H1 (cell line): ENCODE measurements at regions of chr1 and their contacts with region 1.

Region 1: DNA sequence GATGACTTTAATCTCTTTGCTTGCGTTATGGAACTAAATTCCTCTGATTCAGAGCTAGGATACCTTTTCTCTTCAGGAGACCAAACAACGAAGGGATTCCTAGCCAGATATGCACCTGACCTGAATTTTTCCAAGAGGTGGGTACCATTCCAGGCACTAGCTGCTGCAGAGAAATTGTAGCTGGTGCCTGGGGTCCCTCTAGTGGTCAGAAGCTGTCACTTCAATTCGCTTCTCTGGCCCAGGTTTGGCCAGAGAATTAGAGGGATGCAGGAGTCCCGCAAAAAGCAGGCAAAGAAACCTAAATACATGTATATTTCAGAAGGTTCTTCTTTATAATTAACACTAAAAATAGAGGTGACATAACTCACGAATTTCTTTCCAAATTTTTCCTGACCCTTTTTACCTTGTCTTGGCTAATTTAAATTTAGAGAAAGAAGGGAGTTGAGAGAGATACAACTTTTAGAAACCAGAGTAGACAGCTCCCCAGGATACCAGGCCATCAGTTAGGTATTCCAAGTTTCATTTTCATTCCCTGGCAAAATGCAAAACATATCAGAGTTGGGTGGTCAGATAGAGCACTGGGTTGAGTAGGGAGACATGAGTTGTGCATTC is 9.6 kb downstream of the ACKR1 start:
- DNase-seq: peak in 1 of 2 experiments; percentile 65
- H3K4me3 ChIP-seq: no peak overlapping the region
- H3K27ac ChIP-seq: no peak overlapping the region
- H3K4me1 ChIP-seq: peaks cover 6 to 14% (median 11%) of the 10 kb centered on the region in 4 experiments
- H3K27me3 ChIP-seq: no peaks in the 10 kb centered on the region
- CTCF ChIP-seq: peak; percentile 77 to 89 (median 88)
- EP300 ChIP-seq: no peak
- POLR2A ChIP-seq: no peak
- RAD21 ChIP-seq: peak; percentile 82 to 85

Region 2: DNA sequence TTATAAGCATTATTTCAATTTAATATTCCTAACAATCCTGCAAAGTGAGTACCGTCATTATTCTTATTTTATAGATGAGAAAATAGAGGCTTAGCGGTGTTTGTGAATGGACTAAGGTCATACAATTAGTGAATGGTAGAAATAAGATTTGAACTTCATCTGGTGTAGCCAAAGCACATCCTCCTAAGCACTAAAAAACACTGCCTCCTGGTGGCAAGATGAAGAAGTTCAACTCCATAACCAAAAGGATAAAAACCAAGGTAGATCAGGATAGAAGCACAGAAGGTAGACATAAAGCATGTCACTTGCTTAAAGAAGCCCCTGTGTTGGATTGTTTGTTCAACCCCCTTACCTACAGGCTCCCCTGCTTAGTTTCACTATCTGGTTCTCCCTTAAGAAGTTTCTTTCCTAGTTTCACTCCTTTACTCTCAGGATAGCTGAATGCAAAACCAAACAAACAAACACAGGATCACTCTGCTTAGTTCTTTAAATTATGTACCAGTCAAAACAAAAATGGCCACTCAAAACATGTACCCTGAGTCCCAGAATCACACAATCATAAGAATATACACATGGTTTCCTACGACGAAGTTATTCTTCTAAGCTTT is 125.0 kb before region 1 on chr1:
- CTCF ChIA-PET with region 1: interaction called, 10 read pairs
- POLR2A ChIA-PET with region 1: no interaction called
- DNase-seq: no peak
- H3K4me3 ChIP-seq: no peak overlapping the region
- H3K27ac ChIP-seq: no peak overlapping the region
- H3K4me1 ChIP-seq: no peaks in the 10 kb centered on the region
- H3K27me3 ChIP-seq: no peaks in the 10 kb centered on the region
- CTCF ChIP-seq: peak in 2 of 3 experiments; percentile 46 to 74; a peak in 3 of 4 replicates
- EP300 ChIP-seq: no peak
- POLR2A ChIP-seq: no peak
- RAD21 ChIP-seq: peak; percentile 46 to 49; a peak in 3 of 4 replicates

Region 3: GRCh38 chr1:159161001-159161718 is 53.1 kb before region 1 on chr1:
- CTCF ChIA-PET with region 1: interaction called, 660 read pairs
- POLR2A ChIA-PET with region 1: interaction called, 4 read pairs
- DNase-seq: peak in 1 of 2 experiments; percentile 82
- H3K4me3 ChIP-seq: no peak overlapping the region
- H3K27ac ChIP-seq: no peak overlapping the region
- H3K4me1 ChIP-seq: peaks cover 0 to 4% (median 1%) of the 10 kb centered on the region in 4 experiments; a peak in 2 of 7 replicates
- H3K27me3 ChIP-seq: no peaks in the 10 kb centered on the region
- CTCF ChIP-seq: peak; percentile 96 to 100 (median 100)
- EP300 ChIP-seq: no peak
- POLR2A ChIP-seq: no peak
- RAD21 ChIP-seq: peak; percentile 100

Region 4: DNA sequence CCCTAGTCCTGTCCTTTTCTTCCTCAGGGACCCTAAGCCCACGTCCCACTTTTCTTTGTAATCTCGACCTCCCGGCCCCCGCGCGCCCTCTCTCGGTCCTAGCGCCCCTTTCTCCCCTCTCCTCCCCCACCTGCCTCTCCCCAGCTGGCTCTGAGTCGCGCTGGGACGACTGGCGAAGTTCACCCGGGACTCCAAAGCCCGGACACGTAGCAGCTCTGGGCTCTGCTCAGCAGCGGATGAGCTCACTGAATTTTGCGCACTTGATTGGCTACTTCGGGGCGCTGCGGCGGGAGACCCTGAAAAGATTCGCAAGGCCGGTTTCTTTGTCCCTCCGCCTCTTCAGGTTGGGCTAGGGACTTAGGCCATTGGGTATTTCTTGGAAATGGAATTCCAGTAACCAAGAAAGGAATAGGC is 25.9 kb before region 1 on chr1:
- CTCF ChIA-PET with region 1: interaction called, 382 read pairs
- POLR2A ChIA-PET with region 1: interaction called, 3 read pairs
- DNase-seq: peak; percentile 88 to 89
- H3K4me3 ChIP-seq: peak overlapping the region; percentile 57 to 81 (median 71)
- H3K27ac ChIP-seq: peak overlapping the region; percentile 58
- H3K4me1 ChIP-seq: peaks cover 0 to 3% (median under 1%) of the 10 kb centered on the region in 4 experiments; a peak in 3 of 7 replicates
- H3K27me3 ChIP-seq: no peaks in the 10 kb centered on the region
- CTCF ChIP-seq: no peak
- EP300 ChIP-seq: no peak; a peak in 1 of 3 replicates
- POLR2A ChIP-seq: peak in 1 of 2 experiments; percentile 59; a peak in 2 of 3 replicates
- RAD21 ChIP-seq: no peak

Region 5: GRCh38 chr1:159229486-159229885 is 15.2 kb after region 1 on chr1:
- CTCF ChIA-PET with region 1: interaction called, 90 read pairs
- POLR2A ChIA-PET with region 1: no interaction called
- DNase-seq: no peak
- H3K4me3 ChIP-seq: no peak overlapping the region
- H3K27ac ChIP-seq: no peak overlapping the region
- H3K4me1 ChIP-seq: peaks cover 0 to 3% (median 0%) of the 10 kb centered on the region in 4 experiments; a peak in 1 of 7 replicates
- H3K27me3 ChIP-seq: no peaks in the 10 kb centered on the region
- CTCF ChIP-seq: no peak
- EP300 ChIP-seq: no peak
- POLR2A ChIP-seq: no peak
- RAD21 ChIP-seq: no peak

Region 6: DNA sequence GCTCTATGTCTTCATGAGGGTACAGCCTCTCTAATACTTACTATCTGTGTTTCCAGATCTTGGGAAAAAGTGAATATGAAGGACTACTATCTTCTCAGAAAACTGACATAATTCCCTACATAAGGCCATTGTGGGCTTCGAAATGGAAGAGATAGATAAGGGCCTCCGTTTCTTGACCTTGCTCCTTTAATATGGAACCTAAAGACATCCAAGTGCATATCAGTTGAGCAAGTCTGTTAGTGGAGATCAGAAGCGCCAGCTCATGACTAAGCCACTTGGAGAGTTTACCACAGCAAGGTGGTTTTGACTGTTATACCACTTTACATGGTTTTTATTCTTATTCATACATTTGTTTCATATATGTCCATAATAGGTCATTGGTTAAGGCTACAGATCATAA is 52.6 kb after region 1 on chr1:
- CTCF ChIA-PET with region 1: no interaction called
- POLR2A ChIA-PET with region 1: no interaction called
- DNase-seq: no peak
- H3K4me3 ChIP-seq: no peak overlapping the region
- H3K27ac ChIP-seq: no peak overlapping the region
- H3K4me1 ChIP-seq: no peaks in the 10 kb centered on the region
- H3K27me3 ChIP-seq: no peaks in the 10 kb centered on the region
- CTCF ChIP-seq: no peak
- EP300 ChIP-seq: no peak
- POLR2A ChIP-seq: no peak
- RAD21 ChIP-seq: no peak

Region 7: DNA sequence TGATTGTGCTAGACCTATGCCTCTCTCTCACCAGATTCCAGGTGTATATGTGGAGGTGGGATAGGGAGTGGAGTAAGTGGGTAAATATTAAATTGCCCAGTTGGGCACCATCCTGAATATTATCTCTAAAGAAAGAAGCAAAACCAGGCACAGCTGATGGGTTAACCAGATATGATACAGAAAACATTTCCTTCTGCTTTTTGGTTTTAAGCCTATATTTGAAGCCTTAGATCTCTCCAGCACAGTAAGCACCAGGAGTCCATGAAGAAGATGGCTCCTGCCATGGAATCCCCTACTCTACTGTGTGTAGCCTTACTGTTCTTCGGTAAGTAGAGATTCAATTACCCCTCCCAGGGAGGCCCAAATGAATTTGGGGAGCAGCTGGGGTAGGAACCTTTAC is 87.8 kb after region 1 on chr1 and contains the start of gene FCER1A:
- CTCF ChIA-PET with region 1: no interaction called
- POLR2A ChIA-PET with region 1: no interaction called
- DNase-seq: no peak
- H3K4me3 ChIP-seq: no peak within 1 kb of the TSS
- H3K27ac ChIP-seq: no peak within 1 kb of the TSS
- H3K4me1 ChIP-seq: no peaks in the 10 kb centered on the region
- H3K27me3 ChIP-seq: no peaks in the 10 kb centered on the region
- CTCF ChIP-seq: no peak
- EP300 ChIP-seq: no peak
- POLR2A ChIP-seq: no peak
- RAD21 ChIP-seq: no peak
- total RNA-seq, gene FCER1A: not detected in 2 replicates